MCF 10A (cell line): ENCODE measurements at regions of chr6 and their contacts with region 1.

Region 1: GRCh38 chr6:134464690-134465411 is 146.9 kb upstream of the SGK1 start:
- DNase-seq: peak; percentile 76
- H3K4me3 Mint-ChIP-seq: no peak overlapping the region
- H3K27ac Mint-ChIP-seq: peak overlapping the region; percentile 55
- H3K4me1 Mint-ChIP-seq: peaks cover 36% of the 10 kb centered on the region
- H3K27me3 Mint-ChIP-seq: no peaks in the 10 kb centered on the region
- CTCF ChIP-seq: no peak

Region 2: GRCh38 chr6:134373282-134373922 is 91.4 kb before region 1 on chr6:
- CTCF ChIA-PET with region 1: no interaction called
- POLR2A ChIA-PET with region 1: interaction called, 13 read pairs
- intact Hi-C with region 1: no loop called
- DNase-seq: peak; percentile 78
- H3K4me3 Mint-ChIP-seq: peak overlapping the region; percentile 30
- H3K27ac Mint-ChIP-seq: peak overlapping the region; percentile 93
- H3K4me1 Mint-ChIP-seq: peaks cover 32% of the 10 kb centered on the region
- H3K27me3 Mint-ChIP-seq: no peaks in the 10 kb centered on the region
- CTCF ChIP-seq: no peak

Region 3: GRCh38 chr6:134453870-134454510 is 10.9 kb before region 1 on chr6:
- CTCF ChIA-PET with region 1: interaction called, 6 read pairs
- POLR2A ChIA-PET with region 1: interaction called, 27 read pairs
- intact Hi-C with region 1: no loop called
- DNase-seq: no peak
- H3K4me3 Mint-ChIP-seq: no peak overlapping the region
- H3K27ac Mint-ChIP-seq: no peak overlapping the region
- H3K4me1 Mint-ChIP-seq: peaks cover 4% of the 10 kb centered on the region
- H3K27me3 Mint-ChIP-seq: no peaks in the 10 kb centered on the region
- CTCF ChIP-seq: no peak

Region 4: GRCh38 chr6:134495893-134496253 is 31.0 kb after region 1 on chr6:
- CTCF ChIA-PET with region 1: interaction called, 3 read pairs
- POLR2A ChIA-PET with region 1: interaction called, 17 read pairs
- intact Hi-C with region 1: no loop called
- DNase-seq: peak; percentile 94
- H3K4me3 Mint-ChIP-seq: peak overlapping the region; percentile 15
- H3K27ac Mint-ChIP-seq: peak overlapping the region; percentile 90
- H3K4me1 Mint-ChIP-seq: peaks cover 12% of the 10 kb centered on the region
- H3K27me3 Mint-ChIP-seq: no peaks in the 10 kb centered on the region
- CTCF ChIP-seq: no peak

Region 5: DNA sequence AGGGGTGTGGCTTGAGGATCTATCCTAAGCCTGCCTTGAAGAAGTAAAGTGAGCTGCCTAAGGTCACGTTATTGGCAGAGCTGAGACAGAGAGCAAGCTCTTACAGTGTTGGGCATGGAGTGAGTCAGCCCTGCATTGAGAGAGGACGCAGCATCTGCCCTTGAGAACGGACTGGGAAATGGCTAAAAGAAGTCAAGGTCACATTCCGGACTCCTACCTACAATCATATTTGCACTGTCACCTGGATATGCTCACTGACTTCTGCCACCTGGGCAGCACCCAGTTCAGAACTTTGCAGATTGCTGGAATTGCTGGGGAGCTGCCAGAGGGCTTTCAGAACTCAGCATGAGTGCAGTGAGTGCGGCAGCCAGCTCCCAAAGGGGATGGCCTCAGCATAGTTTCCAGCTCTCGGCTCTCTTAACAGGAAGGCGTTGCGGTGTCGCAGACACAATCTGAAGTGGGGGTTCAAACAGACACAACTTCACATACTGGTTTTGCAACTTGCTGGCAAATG is 52.4 kb after region 1 on chr6:
- CTCF ChIA-PET with region 1: interaction called, 3 read pairs
- POLR2A ChIA-PET with region 1: interaction called, 30 read pairs
- intact Hi-C with region 1: no loop called
- DNase-seq: peak; percentile 95
- H3K4me3 Mint-ChIP-seq: peak overlapping the region; percentile 53
- H3K27ac Mint-ChIP-seq: peak overlapping the region; percentile 73
- H3K4me1 Mint-ChIP-seq: peaks cover 41% of the 10 kb centered on the region
- H3K27me3 Mint-ChIP-seq: no peaks in the 10 kb centered on the region
- CTCF ChIP-seq: no peak

Region 6: GRCh38 chr6:135135835-135136234 is 671.0 kb after region 1 on chr6:
- CTCF ChIA-PET with region 1: no interaction called
- POLR2A ChIA-PET with region 1: no interaction called
- intact Hi-C with region 1: no loop called
- DNase-seq: no peak
- H3K4me3 Mint-ChIP-seq: no peak overlapping the region
- H3K27ac Mint-ChIP-seq: no peak overlapping the region
- H3K4me1 Mint-ChIP-seq: no peaks in the 10 kb centered on the region
- H3K27me3 Mint-ChIP-seq: no peaks in the 10 kb centered on the region
- CTCF ChIP-seq: no peak